MCF 10A (cell line): ENCODE measurements at regions of chr3 and their contacts with region 1.

Region 1: DNA sequence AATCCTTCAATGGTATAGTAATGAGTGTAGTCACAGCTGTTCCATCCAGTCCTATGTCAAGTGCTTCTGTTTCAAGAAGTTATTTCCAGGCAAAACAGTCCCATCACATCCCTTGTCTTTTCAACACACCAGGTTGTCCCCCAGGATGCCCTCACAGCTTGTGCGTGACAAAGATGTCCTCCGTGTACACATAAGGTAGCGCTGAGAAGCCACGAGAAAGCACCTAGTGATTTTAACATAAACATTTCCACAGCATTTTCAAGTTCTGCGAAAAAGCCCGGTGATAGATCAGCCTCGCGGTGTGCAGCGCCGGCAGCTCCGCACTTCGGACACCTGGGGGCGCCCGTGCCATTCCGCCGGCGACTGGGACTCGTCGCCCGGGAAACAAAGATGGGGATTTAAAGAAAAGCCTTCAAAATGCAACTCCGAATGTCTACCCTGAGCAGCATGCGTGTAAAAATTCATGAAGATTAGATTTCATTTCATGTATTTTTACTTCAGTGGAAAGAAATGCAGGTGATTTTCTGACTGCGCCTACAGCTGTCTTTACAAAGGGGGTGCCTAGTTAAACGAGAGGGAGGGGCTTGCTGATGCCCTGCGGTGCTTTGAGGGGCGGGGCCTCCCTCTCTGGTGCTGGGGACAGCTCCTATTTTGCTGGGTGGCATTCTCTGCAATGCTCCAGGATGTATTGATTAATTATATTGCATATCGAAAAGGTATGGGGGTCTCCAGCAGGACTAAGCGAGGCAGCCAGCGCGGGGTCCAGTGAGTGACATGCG is 49.9 kb downstream of the KY start:
- DNase-seq: peak; percentile 71
- H3K4me3 Mint-ChIP-seq: no peak overlapping the region
- H3K27ac Mint-ChIP-seq: no peak overlapping the region
- H3K4me1 Mint-ChIP-seq: peaks cover 10% of the 10 kb centered on the region
- H3K27me3 Mint-ChIP-seq: no peaks in the 10 kb centered on the region
- CTCF ChIP-seq: peak; percentile 97

Region 2: DNA sequence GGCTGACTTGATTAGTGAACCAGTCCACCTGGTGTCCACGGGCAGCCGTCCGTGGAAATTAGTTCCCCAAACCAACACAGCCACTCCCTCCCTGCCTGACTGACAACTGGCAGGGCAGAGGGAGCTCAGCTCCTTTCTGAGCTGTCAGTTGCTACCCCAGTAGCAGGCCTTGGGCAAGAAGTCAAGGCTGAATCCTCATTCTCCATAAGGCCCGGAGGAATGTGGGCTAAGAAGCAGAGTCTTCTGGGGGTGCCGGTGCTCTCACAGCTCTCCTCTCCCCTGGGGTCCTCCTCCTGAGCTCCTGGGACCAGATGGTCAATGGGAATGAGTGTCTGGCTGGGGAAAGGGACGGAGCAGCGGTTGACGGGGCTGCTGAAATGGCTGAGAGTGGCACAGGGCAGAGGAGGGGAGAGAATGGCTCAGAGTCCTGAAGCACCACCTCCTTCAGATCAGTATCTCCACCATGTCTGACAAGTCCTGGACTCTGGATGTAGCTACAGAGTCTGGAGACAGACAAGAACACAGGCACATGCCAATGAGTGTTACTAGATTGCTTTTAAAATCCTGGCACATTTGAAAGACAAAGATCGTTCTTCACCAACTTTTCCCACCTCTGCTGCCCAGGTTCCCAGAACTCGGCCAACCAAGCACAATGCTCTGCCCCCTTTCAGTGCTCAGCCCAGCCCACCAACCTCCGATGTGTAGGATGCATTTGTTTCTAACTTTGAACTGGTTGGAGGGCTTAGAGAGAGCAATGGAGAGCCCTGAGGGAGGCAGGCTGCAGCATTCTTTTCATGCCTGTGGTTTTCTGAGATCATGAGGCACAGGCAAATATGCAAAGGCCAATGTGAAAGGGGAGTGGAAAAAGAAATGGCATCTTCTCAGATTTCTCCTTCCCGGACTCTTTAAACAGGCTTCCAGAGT is 243.4 kb before region 1 on chr3:
- CTCF ChIA-PET with region 1: no interaction called
- POLR2A ChIA-PET with region 1: no interaction called
- intact Hi-C with region 1: no loop called
- DNase-seq: peak; percentile 90
- H3K4me3 Mint-ChIP-seq: peak overlapping the region; percentile 12
- H3K27ac Mint-ChIP-seq: peak overlapping the region; percentile 27
- H3K4me1 Mint-ChIP-seq: peaks cover 41% of the 10 kb centered on the region
- H3K27me3 Mint-ChIP-seq: no peaks in the 10 kb centered on the region
- CTCF ChIP-seq: no peak

Region 3: DNA sequence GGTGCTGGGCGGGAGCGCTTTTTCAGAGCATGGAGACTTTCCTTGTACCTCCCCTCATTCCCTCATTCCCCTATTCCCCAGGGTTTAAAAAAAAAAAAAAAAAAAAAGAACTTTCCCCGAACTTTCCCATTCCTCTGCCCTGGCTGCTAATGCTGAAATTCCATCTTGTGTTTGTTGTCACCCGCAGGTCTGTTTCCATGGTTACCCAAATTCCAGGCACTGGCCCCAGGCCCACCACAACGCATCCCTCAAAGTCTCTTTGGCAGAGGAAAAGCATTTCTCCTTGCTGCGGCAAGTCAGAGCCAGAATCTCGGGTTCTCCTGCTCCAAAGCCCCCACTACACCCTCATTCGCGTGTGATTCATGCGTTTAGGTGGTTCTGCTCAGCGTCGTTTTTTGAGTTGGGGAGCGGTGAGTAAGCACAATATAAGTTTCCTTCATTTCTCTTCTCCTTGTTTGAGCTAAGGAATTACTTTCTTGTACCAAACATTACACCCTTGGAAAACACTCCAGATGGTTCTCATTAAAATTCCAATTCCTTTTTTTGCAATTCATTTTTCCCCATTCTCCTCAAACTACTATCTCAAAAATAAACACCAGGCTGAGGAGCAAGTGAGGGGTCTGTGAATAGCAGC is 136.7 kb before region 1 on chr3:
- CTCF ChIA-PET with region 1: no interaction called
- POLR2A ChIA-PET with region 1: no interaction called
- intact Hi-C with region 1: no loop called
- DNase-seq: no peak
- H3K4me3 Mint-ChIP-seq: no peak overlapping the region
- H3K27ac Mint-ChIP-seq: no peak overlapping the region
- H3K4me1 Mint-ChIP-seq: peaks cover 16% of the 10 kb centered on the region
- H3K27me3 Mint-ChIP-seq: no peaks in the 10 kb centered on the region
- CTCF ChIP-seq: no peak

Region 4: GRCh38 chr3:134544316-134544715 is 56.6 kb before region 1 on chr3:
- CTCF ChIA-PET with region 1: no interaction called
- POLR2A ChIA-PET with region 1: no interaction called
- intact Hi-C with region 1: no loop called
- DNase-seq: no peak
- H3K4me3 Mint-ChIP-seq: no peak overlapping the region
- H3K27ac Mint-ChIP-seq: no peak overlapping the region
- H3K4me1 Mint-ChIP-seq: no peaks in the 10 kb centered on the region
- H3K27me3 Mint-ChIP-seq: no peaks in the 10 kb centered on the region
- CTCF ChIP-seq: no peak

Region 5: GRCh38 chr3:134618478-134619300 is 17.8 kb after region 1 on chr3:
- CTCF ChIA-PET with region 1: interaction called, 26 read pairs
- POLR2A ChIA-PET with region 1: no interaction called
- intact Hi-C with region 1: no loop called
- DNase-seq: no peak
- H3K4me3 Mint-ChIP-seq: no peak overlapping the region
- H3K27ac Mint-ChIP-seq: no peak overlapping the region
- H3K4me1 Mint-ChIP-seq: no peaks in the 10 kb centered on the region
- H3K27me3 Mint-ChIP-seq: no peaks in the 10 kb centered on the region
- CTCF ChIP-seq: no peak

Region 6: GRCh38 chr3:134742202-134742601 is 141.3 kb after region 1 on chr3:
- CTCF ChIA-PET with region 1: no interaction called
- POLR2A ChIA-PET with region 1: no interaction called
- intact Hi-C with region 1: no loop called
- DNase-seq: no peak
- H3K4me3 Mint-ChIP-seq: no peak overlapping the region
- H3K27ac Mint-ChIP-seq: no peak overlapping the region
- H3K4me1 Mint-ChIP-seq: no peaks in the 10 kb centered on the region
- H3K27me3 Mint-ChIP-seq: peaks cover 16% of the 10 kb centered on the region
- CTCF ChIP-seq: no peak

Region 7: DNA sequence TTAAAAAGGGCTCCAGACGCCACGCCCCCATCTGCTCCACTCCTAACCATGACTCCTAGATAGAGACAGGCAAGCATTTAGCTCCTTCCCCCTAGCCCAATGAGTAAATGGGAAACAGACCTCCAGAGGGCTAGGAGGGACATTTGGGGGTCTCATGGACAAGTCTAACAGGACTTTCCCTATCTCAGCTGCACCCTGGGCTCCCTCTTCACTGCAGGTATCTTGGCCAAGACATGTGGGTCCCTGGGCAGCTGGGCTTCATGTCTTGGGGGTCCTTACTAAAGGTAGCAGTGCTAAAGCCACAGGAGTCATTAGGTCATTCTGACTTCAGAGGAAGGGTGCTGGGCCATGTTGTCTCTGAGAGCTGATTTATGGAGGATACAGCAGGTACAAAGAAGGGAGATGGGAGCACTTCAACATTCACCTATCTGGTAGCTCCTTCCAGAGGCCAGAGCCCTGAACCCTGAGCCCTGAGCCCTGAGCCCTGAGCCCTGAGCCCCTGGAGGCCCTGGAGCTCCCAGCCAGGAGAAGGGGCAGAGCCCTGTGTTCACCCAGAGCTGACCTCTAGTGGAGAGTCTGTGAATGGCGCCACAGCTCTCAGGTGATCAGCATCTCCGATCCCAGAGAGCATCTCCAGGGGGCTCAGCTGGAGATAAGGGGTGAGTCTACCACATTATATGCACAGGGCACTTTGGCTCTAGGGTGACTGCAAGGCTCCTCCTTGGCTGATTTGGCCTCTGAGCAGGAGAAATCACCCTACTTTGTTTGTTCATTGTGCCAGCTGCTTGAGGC is 154.1 kb after region 1 on chr3:
- CTCF ChIA-PET with region 1: interaction called, 53 read pairs
- POLR2A ChIA-PET with region 1: interaction called, 3 read pairs
- intact Hi-C with region 1: loop called (anchors 1 kb)
- DNase-seq: peak; percentile 64
- H3K4me3 Mint-ChIP-seq: no peak overlapping the region
- H3K27ac Mint-ChIP-seq: no peak overlapping the region
- H3K4me1 Mint-ChIP-seq: no peaks in the 10 kb centered on the region
- H3K27me3 Mint-ChIP-seq: peaks cover 24% of the 10 kb centered on the region
- CTCF ChIP-seq: peak; percentile 68

Region 8: DNA sequence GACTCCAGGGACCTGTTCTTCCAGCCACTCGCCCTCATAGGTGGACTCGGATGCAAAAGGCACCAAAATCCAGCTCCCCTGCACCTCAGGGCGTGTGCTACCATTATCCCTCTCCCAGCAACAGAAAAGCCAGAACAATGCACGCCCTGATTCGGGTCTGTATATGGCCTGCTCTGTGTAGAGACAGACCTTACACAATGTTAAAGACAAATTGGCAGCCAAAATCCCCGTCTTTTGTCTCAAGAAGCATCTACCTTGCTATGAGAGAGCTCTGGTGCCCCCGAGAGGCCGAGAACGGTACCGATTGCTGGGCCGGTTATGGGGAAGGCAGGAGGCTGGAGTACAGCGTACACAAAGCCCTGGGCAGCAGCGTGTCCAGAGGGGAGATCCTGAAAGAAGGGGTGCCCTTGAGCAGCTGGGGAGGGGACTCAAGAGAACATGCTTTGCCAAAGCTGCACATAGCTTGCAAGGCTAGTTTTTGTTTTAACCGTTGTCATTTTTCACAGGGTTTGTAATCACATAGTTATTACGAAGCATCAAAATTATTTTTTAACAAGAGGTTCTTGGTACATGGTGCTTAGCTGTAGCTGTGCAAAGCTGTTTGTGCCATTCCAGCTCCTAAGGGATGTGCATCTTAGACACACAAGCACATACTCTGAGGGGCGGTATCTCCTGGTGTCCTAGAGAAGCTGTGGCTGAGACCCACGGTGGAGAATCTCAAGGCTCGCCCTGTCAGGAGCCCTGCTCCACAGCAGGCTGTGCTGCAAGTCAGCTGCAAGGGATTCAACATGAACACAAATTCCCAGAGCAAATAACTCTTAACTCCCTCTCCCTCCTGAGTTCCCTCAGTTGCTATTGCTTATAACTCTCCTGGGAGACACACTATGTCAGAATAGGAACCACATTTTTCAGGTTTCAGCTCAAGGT is 903.1 kb after region 1 on chr3:
- CTCF ChIA-PET with region 1: interaction called, 16 read pairs
- POLR2A ChIA-PET with region 1: interaction called, 3 read pairs
- intact Hi-C with region 1: loop called (anchors 1 kb)
- DNase-seq: peak; percentile 69
- H3K4me3 Mint-ChIP-seq: no peak overlapping the region
- H3K27ac Mint-ChIP-seq: no peak overlapping the region
- H3K4me1 Mint-ChIP-seq: peaks cover 5% of the 10 kb centered on the region
- H3K27me3 Mint-ChIP-seq: peaks cover 41% of the 10 kb centered on the region
- CTCF ChIP-seq: peak; percentile 62